ENCODE measurements at regions of chr5 and their contacts with region 1.

Region 1: GRCh38 chr5:97231025-97231636 is 48.1 kb upstream of the RIOK2 start:
- DNase-seq: no peak
- H3K4me3 Mint-ChIP-seq: no peak overlapping the region
- H3K27ac Mint-ChIP-seq: no peak overlapping the region
- H3K4me1 Mint-ChIP-seq: peaks cover 3% of the 10 kb centered on the region
- H3K27me3 Mint-ChIP-seq: peaks cover 13% of the 10 kb centered on the region

Region 2: GRCh38 chr5:97208714-97209113 is 22.4 kb before region 1 on chr5:
- intact Hi-C with region 1: no loop called
- DNase-seq: no peak
- H3K4me3 Mint-ChIP-seq: no peak overlapping the region
- H3K27ac Mint-ChIP-seq: no peak overlapping the region
- H3K4me1 Mint-ChIP-seq: no peaks in the 10 kb centered on the region
- H3K27me3 Mint-ChIP-seq: peaks cover 7% of the 10 kb centered on the region

Region 3: DNA sequence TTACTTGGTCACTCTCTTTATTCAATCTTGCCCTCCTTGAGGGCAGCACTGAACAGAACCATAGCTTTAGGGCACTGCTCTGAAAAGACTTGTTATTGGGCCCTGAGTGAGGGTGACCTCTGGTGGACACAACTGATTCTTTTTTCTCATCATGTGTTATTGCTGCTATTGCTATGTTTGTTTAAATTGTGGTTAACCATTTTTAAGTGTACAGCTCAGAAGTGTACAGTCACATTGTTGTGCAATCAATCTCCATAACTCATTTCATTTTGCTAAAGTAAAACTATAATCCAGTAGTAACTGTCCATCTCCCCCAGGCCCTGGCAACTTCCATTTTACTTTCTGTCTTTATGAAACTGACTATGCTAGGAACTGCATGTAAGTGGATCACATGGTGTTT is 303.0 kb after region 1 on chr5:
- intact Hi-C with region 1: loop called (anchors 1 kb)
- DNase-seq: no peak
- H3K4me3 Mint-ChIP-seq: no peak overlapping the region
- H3K27ac Mint-ChIP-seq: no peak overlapping the region
- H3K4me1 Mint-ChIP-seq: peaks cover 13% of the 10 kb centered on the region
- H3K27me3 Mint-ChIP-seq: peaks cover 9% of the 10 kb centered on the region

Region 4: DNA sequence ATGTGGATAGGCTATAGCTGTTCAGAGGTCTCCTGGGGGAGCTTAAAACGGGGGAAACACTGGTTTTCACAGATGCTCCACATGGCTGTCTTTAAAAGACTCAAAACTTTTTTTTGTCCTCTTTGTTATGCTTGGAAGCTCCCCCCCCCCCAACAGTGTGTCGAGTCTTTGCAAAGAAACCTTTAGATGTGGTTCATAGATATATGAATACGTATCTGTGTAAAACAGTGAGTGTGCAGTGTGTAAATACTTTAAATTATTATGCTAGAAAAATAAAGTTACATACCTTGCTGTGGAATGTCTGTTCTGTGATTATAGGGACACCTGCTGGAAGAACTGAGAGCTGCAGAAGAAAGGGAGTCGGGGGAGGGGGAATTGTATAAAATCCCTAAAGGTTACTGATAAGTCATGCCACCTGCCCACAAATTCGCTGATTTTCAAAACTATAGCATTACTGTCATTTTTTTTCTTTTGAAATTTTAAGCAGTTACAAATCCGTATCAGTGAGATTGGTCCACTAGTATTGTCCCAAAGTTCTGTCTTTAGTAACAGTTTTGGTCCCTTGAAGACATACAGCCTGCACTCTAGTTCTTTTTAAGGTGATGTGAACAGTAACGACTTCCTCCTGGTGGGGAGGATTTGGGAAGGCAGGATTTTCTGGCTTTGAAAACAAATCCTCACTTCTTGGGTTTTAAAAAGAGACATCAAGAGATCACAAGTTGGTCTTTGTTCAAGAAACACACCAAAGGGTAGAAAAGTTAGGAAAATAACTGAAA is 1565.3 kb after region 1 on chr5:
- intact Hi-C with region 1: loop called (anchors 2 kb)
- DNase-seq: no peak
- H3K4me3 Mint-ChIP-seq: no peak overlapping the region
- H3K27ac Mint-ChIP-seq: no peak overlapping the region
- H3K4me1 Mint-ChIP-seq: no peaks in the 10 kb centered on the region
- H3K27me3 Mint-ChIP-seq: peaks cover 6% of the 10 kb centered on the region